ENCODE measurements at regions of chr6 and their contacts with region 1.

Region 1: DNA sequence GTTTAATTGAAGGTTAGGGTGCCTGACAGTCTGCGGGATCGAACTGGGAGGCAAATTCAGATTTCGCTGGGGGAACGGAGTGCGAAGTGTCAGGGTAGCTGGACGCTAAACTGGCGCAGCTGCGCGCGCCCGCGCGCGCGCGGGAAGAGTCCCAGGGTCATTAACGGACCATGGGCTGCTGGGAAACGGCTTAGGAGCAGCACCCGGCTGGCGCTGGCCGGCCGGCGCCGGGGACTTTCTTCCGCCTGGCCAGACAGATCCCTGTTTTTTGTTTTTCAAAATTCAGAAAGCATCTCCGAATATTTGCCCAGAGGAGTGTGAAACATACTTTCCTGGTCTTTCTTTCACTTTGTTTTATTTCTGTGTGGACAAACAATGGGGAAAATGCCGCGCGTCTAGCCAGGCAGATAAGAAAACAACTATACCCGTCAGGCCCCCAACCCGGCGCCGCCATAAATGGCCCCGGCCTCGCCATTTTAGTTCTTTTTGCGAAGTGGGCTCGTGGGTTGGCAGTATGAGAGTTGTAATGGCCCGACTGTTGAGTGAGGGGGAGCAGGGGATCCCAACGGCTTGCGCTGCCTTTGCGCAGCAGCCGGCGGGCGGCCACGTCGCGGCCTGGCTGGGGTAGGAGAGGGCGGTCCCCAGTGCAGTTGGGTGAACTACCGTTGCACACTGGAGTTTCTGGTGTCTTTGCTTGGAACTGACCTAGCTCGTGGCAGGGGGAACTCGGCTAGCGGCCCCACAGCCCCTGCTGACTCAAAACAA is 7.1 kb downstream of the HSPA1B start:
- DNase-seq: peak; percentile 93 to 95
- H3K4me3 ChIP-seq: peak overlapping the region; percentile 100
- H3K4me1 ChIP-seq: peaks cover 21% of the 10 kb centered on the region
- H3K27me3 ChIP-seq: no peaks in the 10 kb centered on the region

Region 2: GRCh38 chr6:31739639-31740396 is 94.8 kb before region 1 on chr6 and contains the start of gene MSH5:
- in situ Hi-C with region 1: loop called (anchors 5 kb)
- DNase-seq: peak; percentile 99 to 100
- H3K4me3 ChIP-seq: peak within 1 kb of the TSS; percentile 62
- H3K4me1 ChIP-seq: peaks cover 34% of the 10 kb centered on the region
- H3K27me3 ChIP-seq: no peaks in the 10 kb centered on the region